ENCODE measurements at regions of chr4 and their contacts with region 1.

Region 1: GRCh38 chr4:40316782-40317635 is 18.1 kb upstream of the CHRNA9 start:
- DNase-seq: peak; percentile 95
- H3K4me3 ChIP-seq: peak overlapping the region; percentile 37
- H3K27ac ChIP-seq: peak overlapping the region; percentile 94
- H3K4me1 ChIP-seq: peaks cover 26% of the 10 kb centered on the region
- H3K27me3 ChIP-seq: no peaks in the 10 kb centered on the region
- CTCF ChIP-seq: peak; percentile 91

Region 2: DNA sequence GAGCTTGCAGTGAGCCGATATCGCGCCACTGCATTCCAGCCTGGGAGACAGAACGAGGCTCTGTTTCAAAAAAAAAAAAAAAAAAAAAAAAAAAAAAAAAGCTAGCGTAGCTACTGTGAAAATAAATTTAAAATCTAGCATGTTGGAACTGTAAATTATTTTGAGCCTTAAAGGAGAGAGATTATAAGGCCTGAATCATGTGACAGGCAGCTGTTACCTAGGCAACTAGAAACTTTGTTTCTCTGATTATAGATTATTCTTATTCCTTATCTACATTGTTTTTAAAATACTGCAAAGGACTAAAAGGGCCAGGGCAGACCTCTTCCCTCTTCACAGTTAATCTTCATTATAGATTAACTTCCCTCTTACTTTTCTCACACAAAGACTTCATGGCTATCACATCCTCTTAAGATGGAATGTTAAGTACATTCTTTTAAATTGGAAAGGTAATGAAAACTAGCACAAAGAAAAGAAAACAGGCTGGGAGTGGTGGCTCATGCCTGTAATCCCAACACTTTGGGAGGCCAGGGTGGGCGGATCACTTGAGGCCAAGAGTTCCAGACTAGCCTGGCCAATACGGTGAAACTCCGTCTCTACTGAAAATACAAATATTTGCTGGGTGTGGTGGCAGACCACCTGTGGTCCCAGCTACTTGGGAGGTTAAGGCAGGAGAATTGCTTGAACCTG is 318.2 kb before region 1 on chr4:
- CTCF ChIA-PET with region 1: no interaction called
- POLR2A ChIA-PET with region 1: no interaction called
- intact Hi-C with region 1: loop called (anchors 10 kb)
- DNase-seq: no peak
- H3K4me3 ChIP-seq: no peak overlapping the region
- H3K27ac ChIP-seq: no peak overlapping the region
- H3K4me1 ChIP-seq: no peaks in the 10 kb centered on the region
- H3K27me3 ChIP-seq: no peaks in the 10 kb centered on the region
- CTCF ChIP-seq: no peak

Region 3: GRCh38 chr4:40333921-40334352 is 16.9 kb after region 1 on chr4:
- CTCF ChIA-PET with region 1: interaction called, 20 read pairs
- POLR2A ChIA-PET with region 1: no interaction called
- intact Hi-C with region 1: no loop called
- DNase-seq: peak; percentile 94
- H3K4me3 ChIP-seq: no peak overlapping the region
- H3K27ac ChIP-seq: peak overlapping the region; percentile 72
- H3K4me1 ChIP-seq: peaks cover 36% of the 10 kb centered on the region
- H3K27me3 ChIP-seq: no peaks in the 10 kb centered on the region
- CTCF ChIP-seq: no peak

Region 4: DNA sequence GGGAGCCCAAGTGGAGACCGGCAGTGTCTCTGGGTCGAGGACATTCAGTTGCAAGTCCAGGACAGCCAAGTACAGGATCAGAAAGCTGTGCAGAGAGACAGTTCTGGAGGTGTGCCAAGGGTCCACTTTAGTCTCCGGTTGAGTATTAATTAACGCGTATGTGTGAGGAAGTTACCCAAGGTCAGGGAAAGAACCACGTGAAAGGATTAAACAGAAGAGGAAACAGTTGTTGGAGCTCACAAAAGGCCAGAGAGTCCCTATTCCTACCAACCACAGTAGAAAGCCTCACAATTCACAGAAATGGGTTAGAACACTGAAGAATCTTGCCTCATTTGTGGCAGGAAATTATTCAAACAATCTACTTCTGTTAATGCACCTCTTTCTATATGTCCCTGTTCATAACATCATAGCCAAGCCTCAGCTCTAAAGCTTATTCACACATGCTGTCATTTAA is 414.8 kb after region 1 on chr4:
- CTCF ChIA-PET with region 1: interaction called, 10 read pairs
- POLR2A ChIA-PET with region 1: no interaction called
- intact Hi-C with region 1: no loop called
- DNase-seq: peak; percentile 42
- H3K4me3 ChIP-seq: no peak overlapping the region
- H3K27ac ChIP-seq: no peak overlapping the region
- H3K4me1 ChIP-seq: peaks cover 8% of the 10 kb centered on the region
- H3K27me3 ChIP-seq: no peaks in the 10 kb centered on the region
- CTCF ChIP-seq: no peak